ENCODE measurements at regions of chr9 and their contacts with region 1.

Region 1: GRCh38 chr9:113275157-113276131 is at the starts of genes CDC26 and PRPF4:
- H3K4me3 Mint-ChIP-seq: no peak within 1 kb of the TSS
- H3K27ac Mint-ChIP-seq: no peak within 1 kb of the TSS
- H3K4me1 Mint-ChIP-seq: peaks cover 9% of the 10 kb centered on the region
- H3K27me3 Mint-ChIP-seq: no peaks in the 10 kb centered on the region

Region 2: GRCh38 chr9:113150670-113151611 is 124.5 kb before region 1 on chr9 and contains the start of gene SLC31A2:
- intact Hi-C with region 1: loop called (anchors 10 kb)
- H3K4me3 Mint-ChIP-seq: peak within 1 kb of the TSS; percentile 90
- H3K27ac Mint-ChIP-seq: peak within 1 kb of the TSS; percentile 99
- H3K4me1 Mint-ChIP-seq: peaks cover 63% of the 10 kb centered on the region
- H3K27me3 Mint-ChIP-seq: peaks cover 1% of the 10 kb centered on the region

Region 3: GRCh38 chr9:113221003-113221799 is 54.2 kb before region 1 on chr9 and contains the starts of genes FKBP15 and SLC31A1:
- intact Hi-C with region 1: loop called (anchors 1 kb)
- H3K4me3 Mint-ChIP-seq: peak within 1 kb of the TSS; percentile 95
- H3K27ac Mint-ChIP-seq: peak within 1 kb of the TSS; percentile 95
- H3K4me1 Mint-ChIP-seq: peaks cover 29% of the 10 kb centered on the region
- H3K27me3 Mint-ChIP-seq: no peaks in the 10 kb centered on the region

Region 4: GRCh38 chr9:113349445-113350094 is 74.1 kb after region 1 on chr9 and contains the start of gene BSPRY:
- intact Hi-C with region 1: no loop called
- H3K4me3 Mint-ChIP-seq: peak within 1 kb of the TSS; percentile 71
- H3K27ac Mint-ChIP-seq: peak within 1 kb of the TSS; percentile 61
- H3K4me1 Mint-ChIP-seq: peaks cover 20% of the 10 kb centered on the region
- H3K27me3 Mint-ChIP-seq: peaks cover 21% of the 10 kb centered on the region

Region 5: DNA sequence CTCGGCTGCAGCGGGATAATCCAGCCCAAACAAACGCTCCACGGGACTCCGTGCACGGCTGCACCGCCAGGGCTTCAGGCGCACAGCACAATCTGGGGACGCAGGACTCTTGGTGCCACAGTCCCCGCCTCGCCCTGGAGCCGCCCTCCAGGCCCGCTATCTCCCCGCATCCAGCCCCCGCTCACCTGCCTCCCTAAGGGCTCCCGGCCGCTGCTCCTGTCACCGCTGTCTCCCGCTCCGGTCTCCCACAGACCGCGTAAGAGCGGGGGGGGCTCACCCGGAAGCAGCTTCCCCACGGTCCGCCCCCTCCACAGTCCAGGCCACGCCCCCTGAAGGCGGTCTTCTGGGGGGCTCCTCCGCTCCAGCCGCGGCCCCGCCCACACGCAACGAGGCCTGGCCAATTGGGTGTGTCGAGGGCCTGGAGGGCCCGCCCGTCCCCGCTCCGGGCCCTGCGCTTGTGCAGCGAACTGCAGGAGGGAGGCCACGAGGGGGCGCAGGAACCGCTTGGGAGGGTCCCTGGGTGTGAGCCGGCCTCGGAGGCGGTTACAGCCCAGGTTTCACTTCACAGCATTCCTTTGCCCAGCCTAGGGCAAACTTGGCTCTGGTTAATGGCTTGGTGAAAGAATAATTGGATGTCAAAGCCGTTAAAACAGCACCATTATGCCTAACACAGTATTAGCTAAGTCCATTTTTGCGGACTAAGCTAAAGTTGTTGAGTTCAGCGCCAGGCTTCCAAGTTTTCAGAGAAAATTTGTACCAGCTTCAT is 125.8 kb after region 1 on chr9 and contains the start of gene ALAD:
- intact Hi-C with region 1: loop called (anchors 5 kb)
- H3K4me3 Mint-ChIP-seq: peak within 1 kb of the TSS; percentile 98
- H3K27ac Mint-ChIP-seq: peak within 1 kb of the TSS; percentile 96
- H3K4me1 Mint-ChIP-seq: peaks cover 68% of the 10 kb centered on the region
- H3K27me3 Mint-ChIP-seq: no peaks in the 10 kb centered on the region

Region 6: DNA sequence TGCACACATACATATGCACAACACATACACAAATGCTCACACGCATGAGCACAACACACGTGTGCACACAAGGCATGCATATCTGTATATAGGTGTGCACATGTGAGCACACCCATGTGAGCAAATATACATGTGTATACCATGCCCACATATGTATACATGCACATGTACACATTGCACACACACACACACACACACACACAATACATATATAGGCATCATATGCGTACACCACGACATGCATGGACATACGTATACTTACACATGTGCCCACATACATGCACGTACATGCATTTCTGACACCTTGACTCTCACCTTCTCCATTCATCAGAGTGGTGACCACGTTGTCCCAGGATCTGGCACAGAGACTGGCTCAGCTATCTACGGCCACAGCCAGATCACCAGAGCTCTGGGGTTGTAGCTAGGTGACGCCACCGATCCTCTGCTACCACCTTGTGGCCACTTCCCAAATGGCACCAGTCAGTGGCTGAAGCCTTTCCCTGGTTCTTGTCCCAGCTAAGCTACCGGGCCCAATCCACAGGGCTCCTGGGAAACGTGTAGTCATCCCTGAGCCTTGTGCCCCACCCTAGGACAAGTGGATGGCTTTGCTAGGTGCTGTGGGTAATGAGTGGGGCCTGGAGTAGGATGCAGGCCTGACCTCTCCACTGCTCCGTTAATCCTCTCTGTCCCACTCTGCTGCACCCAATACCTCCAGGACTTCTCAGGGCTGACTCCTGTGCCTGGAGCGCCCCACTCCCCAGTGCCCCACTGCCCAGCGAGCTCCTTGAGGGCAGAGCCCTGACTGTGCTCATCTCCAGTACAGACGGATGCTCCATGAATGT is 382.5 kb after region 1 on chr9:
- intact Hi-C with region 1: loop called (anchors 5 kb)
- H3K4me3 Mint-ChIP-seq: no peak overlapping the region
- H3K27ac Mint-ChIP-seq: no peak overlapping the region
- H3K4me1 Mint-ChIP-seq: peaks cover 23% of the 10 kb centered on the region
- H3K27me3 Mint-ChIP-seq: peaks cover 26% of the 10 kb centered on the region

Measured in dendritic cell treated with granulocyte-macrophage colony-stimulating factor and Interleukin-4, amounts not matched to agents 40 ng/mL and 50 ng/mL, for 4 days (primary cell).